ENCODE measurements at regions of chr6 and their contacts with region 1.

Region 1: GRCh38 chr6:109073344-109074132 is 21.1 kb downstream of the SESN1 start:
- H3K4me3 ChIP-seq: no peak overlapping the region
- H3K27ac ChIP-seq: no peak overlapping the region
- H3K4me1 ChIP-seq: peaks cover 30% of the 10 kb centered on the region
- CTCF ChIP-seq: peak; percentile 37; the same call in 1 of the 2 replicates

Region 2: DNA sequence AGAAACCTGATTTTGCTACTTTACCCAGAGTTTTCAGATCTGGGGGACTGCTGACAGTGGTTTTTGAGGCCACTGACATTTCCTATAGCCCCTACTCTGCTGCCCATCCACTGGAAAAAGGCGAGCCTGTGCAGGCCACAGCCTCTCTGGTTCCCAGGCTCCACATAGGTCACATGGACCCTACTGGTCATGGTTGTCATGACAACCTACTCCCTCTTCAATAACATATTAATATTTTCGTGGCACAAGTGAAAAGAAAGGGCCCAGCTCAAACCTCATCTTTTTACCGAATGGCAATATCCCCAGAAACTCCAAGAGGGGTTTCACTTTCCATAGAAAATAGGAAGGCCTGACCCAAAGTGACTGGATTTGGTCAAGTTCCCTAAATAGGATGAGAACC is 523.8 kb before region 1 on chr6:
- CTCF ChIA-PET with region 1: interaction called, 156 read pairs
- POLR2A ChIA-PET with region 1: no interaction called
- H3K4me3 ChIP-seq: no peak overlapping the region
- H3K27ac ChIP-seq: no peak overlapping the region
- H3K4me1 ChIP-seq: no peaks in the 10 kb centered on the region
- CTCF ChIP-seq: no peak

Region 3: DNA sequence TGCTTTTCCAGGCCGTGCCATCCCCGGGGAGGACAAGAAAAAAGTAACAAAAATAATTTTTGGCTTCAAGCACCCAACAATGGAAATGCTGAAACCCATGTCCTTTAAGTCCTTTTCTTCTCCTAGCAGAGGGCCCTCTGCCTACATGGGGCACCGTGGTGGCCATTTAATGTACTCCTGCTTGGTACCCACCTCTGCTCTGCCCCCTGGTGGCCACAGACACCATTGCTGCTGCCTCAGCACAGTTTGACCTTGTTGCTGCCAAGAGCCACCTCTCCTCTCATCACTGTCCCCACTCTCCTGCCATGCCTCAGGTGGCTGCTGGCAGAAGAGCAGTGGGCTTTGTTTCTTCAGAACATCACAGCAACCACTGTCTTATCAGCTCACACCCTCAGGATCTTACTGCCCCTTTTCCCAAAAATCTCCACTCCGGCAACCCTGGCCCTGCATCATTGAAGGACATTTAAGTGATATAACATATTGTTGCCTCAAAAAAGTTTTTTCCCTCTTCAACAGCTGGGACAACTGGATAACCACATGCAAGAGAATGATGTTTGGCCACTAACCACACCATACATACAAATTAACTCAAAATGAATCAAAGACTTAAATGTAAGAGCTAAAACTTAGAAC is 238.2 kb before region 1 on chr6:
- CTCF ChIA-PET with region 1: interaction called, 20 read pairs
- POLR2A ChIA-PET with region 1: no interaction called
- H3K4me3 ChIP-seq: no peak overlapping the region
- H3K27ac ChIP-seq: no peak overlapping the region
- H3K4me1 ChIP-seq: no peaks in the 10 kb centered on the region
- CTCF ChIP-seq: peak; percentile 92

Region 4: DNA sequence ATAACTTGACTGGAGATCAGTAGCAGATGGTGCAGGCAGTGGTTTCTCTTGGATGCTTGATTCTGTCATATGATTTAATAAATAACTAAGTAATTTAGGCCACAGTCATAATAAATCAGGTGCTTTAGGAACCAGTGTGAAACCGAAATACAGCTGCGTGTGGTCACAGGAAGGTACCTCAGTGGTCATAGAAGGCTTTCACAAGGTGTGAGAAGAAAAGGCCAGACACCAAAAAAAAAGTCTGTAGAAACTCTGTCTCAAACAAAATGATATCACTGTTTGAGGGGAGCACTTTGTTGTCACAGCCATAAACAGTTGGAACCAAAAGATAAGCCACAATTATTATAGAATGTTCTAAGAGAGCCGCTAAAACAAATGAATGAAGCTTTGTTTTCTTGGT is 168.8 kb before region 1 on chr6:
- CTCF ChIA-PET with region 1: interaction called, 16 read pairs
- POLR2A ChIA-PET with region 1: no interaction called
- H3K4me3 ChIP-seq: no peak overlapping the region
- H3K27ac ChIP-seq: no peak overlapping the region
- H3K4me1 ChIP-seq: no peaks in the 10 kb centered on the region
- CTCF ChIP-seq: no peak

Region 5: GRCh38 chr6:109050012-109050411 is 23.5 kb before region 1 on chr6:
- CTCF ChIA-PET with region 1: interaction called, 15 read pairs
- POLR2A ChIA-PET with region 1: no interaction called
- H3K4me3 ChIP-seq: no peak overlapping the region
- H3K27ac ChIP-seq: no peak overlapping the region
- H3K4me1 ChIP-seq: peaks cover 30% of the 10 kb centered on the region
- CTCF ChIP-seq: no peak

Region 6: GRCh38 chr6:109095027-109095834 is 21.7 kb after region 1 on chr6 and contains the start of gene CEP57L1:
- CTCF ChIA-PET with region 1: interaction called, 4 read pairs
- POLR2A ChIA-PET with region 1: interaction called, 11 read pairs
- H3K4me3 ChIP-seq: peak within 1 kb of the TSS; percentile 61
- H3K27ac ChIP-seq: peak within 1 kb of the TSS; percentile 94
- H3K4me1 ChIP-seq: 0 out of 2 replicates have a peak, but pooled peaks cover 3% of the 10 kb centered on the region
- CTCF ChIP-seq: peak; percentile 36; the same call in 1 of the 2 replicates

Region 7: GRCh38 chr6:109292420-109292819 is 218.9 kb after region 1 on chr6:
- CTCF ChIA-PET with region 1: no interaction called
- POLR2A ChIA-PET with region 1: no interaction called
- H3K4me3 ChIP-seq: no peak overlapping the region
- H3K27ac ChIP-seq: no peak overlapping the region
- H3K4me1 ChIP-seq: no peaks in the 10 kb centered on the region
- CTCF ChIP-seq: no peak

Measured in HEK293 (cell line).